Caco-2 (cell line): ENCODE measurements at regions of chr22 and their contacts with region 1.

Region 1: DNA sequence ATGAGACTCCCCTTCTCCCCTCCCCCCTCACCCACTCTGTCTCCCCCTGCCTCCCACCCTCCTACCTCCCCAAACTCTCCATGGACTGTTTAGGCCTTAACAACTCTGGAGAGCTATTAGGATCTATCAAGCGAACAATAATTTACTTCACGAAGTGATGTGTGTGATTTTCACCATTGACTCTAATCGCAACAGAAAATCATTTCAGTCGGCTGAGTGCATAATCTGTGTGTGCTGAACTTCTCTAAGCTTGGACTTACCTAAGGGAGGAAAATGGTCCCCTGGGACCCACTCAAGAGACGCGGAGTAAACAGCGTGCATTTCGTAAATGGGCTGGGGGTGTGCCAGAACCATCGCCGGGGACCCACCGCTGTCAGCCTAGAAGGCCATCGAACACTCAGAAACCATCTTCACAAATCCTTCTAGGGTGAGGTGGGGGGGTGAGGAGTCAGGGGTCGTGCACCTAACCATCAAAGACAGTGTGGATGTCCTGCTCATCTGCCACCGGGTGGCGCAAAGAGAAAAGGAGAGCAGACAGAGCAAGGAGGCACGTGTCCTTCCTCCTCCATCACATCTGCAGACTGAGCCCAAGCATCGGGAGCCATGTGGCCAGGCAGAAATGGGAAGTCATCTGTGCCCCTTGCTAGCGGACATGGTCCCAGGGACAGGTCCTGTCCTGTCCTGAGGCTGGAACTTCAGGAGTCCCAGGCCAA is 62.1 kb upstream of the NUP50 start:
- DNase-seq: peak; percentile 75
- H3K4me3 ChIP-seq: no peak overlapping the region
- H3K4me3 Mint-ChIP-seq: no peak overlapping the region
- H3K27ac Mint-ChIP-seq: no peak overlapping the region
- H3K4me1 ChIP-seq: no peaks in the 10 kb centered on the region
- H3K4me1 Mint-ChIP-seq: peaks cover 15% of the 10 kb centered on the region
- H3K27me3 ChIP-seq: no peaks in the 10 kb centered on the region
- H3K27me3 Mint-ChIP-seq: no peaks in the 10 kb centered on the region
- CTCF ChIP-seq: peak; percentile 63 to 73

Region 2: DNA sequence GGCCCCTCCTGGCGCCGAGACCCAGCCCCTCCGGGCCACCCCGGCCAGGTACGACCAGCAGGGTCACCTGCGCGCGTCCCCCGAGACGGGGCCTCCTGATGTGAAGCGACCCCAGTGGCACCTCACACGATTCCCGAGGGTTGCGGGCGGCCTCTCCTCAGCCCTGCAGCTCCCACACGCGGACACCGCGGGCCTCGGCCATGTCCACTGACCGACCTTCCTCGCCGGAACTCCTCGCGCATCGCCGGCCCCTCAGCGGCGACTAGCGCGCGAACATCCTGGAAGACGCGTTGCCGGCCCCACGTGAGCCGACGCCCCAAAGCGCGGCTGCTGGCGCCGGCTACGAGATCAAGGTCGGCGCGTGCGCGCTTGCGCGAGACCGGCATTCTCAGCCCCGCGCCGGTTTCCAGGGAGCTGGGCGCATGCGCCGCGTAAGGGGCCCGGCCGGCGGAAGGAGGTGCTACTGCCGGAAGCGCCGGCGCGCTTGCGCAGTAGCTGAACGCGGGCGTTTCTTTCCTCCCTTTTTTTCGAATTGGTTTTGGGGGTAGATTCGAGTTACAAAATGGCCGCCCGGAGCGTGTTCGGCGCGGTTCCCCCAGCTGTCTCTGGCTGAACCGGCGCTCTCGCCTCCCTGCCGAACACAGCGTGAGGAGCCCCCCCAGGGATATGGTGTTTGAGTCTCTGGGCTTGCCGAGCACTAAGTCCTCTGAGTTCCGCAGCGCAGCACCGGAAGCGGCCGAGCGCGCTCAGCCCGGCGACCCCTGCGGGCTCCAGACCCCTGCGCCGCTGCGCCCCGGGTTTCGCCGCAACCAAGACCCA is 62.0 kb after region 1 on chr22 and contains the start of gene NUP50:
- CTCF ChIA-PET with region 1: no interaction called
- POLR2A ChIA-PET with region 1: no interaction called
- intact Hi-C with region 1: loop called (anchors 5 kb)
- DNase-seq: peak; percentile 95 to 98
- H3K4me3 ChIP-seq: peak within 1 kb of the TSS; percentile 78
- H3K4me3 Mint-ChIP-seq: peak within 1 kb of the TSS; percentile 100
- H3K27ac Mint-ChIP-seq: peak within 1 kb of the TSS; percentile 97
- H3K4me1 ChIP-seq: peaks cover 47% of the 10 kb centered on the region
- H3K4me1 Mint-ChIP-seq: peaks cover 38% of the 10 kb centered on the region
- H3K27me3 ChIP-seq: no peaks in the 10 kb centered on the region
- H3K27me3 Mint-ChIP-seq: no peaks in the 10 kb centered on the region
- CTCF ChIP-seq: no peak
- total RNA-seq, gene NUP50: 122 and 128 TPM in 2 replicates

Region 3: DNA sequence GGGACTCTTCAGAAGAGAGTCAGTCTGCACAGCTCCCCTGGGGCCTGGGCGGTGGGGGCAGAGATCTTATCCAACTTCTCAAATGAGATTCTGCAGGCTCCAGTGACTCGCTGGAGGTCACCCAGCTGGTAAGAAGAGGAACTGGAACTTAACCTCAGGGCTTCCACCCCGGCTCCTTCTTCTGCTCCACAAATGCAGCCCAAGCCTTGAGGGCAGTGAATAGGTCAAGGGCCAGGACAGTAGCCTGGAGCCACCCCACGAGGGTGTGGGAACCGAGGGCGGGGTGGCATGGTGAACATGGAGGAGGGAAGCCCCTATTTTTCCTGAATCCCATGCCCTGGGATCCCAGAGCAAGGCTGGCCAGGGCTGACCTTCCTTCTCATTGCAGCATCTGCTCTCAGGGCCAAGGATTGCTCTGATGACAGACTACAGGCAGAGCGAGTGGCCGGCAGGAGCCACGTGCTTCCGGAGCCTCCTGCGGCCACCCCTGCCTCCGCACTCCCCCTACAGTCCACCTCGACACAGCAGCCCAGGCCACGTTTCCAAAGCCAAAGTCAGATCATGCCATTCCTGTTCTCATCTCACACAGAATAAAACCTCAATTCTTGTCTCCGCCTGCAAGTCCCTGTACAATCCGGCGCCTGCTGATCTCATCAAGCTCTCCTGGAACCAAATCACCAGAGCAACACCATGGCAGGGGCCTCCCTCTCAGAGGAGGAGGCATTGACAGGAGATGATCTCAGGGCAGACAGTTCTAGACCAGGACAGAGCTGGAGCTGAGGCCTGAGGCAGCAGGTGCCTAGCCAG is 162.0 kb after region 1 on chr22:
- CTCF ChIA-PET with region 1: no interaction called
- POLR2A ChIA-PET with region 1: no interaction called
- intact Hi-C with region 1: loop called (anchors 1 kb)
- DNase-seq: peak; percentile 84 to 85
- H3K4me3 ChIP-seq: no peak overlapping the region
- H3K4me3 Mint-ChIP-seq: no peak overlapping the region
- H3K27ac Mint-ChIP-seq: peak overlapping the region; percentile 33
- H3K4me1 ChIP-seq: peaks cover 12% of the 10 kb centered on the region
- H3K4me1 Mint-ChIP-seq: peaks cover 9% of the 10 kb centered on the region
- H3K27me3 ChIP-seq: no peaks in the 10 kb centered on the region
- H3K27me3 Mint-ChIP-seq: no peaks in the 10 kb centered on the region
- CTCF ChIP-seq: peak; percentile 79 to 96

Region 4: GRCh38 chr22:45276507-45277105 is 174.9 kb after region 1 on chr22:
- CTCF ChIA-PET with region 1: no interaction called
- POLR2A ChIA-PET with region 1: no interaction called
- intact Hi-C with region 1: no loop called
- DNase-seq: no peak
- H3K4me3 ChIP-seq: no peak overlapping the region
- H3K4me3 Mint-ChIP-seq: no peak overlapping the region
- H3K27ac Mint-ChIP-seq: peak overlapping the region; percentile 87
- H3K4me1 ChIP-seq: peaks cover 90% of the 10 kb centered on the region
- H3K4me1 Mint-ChIP-seq: peaks cover 48% of the 10 kb centered on the region
- H3K27me3 ChIP-seq: no peaks in the 10 kb centered on the region
- H3K27me3 Mint-ChIP-seq: no peaks in the 10 kb centered on the region
- CTCF ChIP-seq: no peak